ENCODE measurements at regions of chr2 and their contacts with region 1.

Region 1: DNA sequence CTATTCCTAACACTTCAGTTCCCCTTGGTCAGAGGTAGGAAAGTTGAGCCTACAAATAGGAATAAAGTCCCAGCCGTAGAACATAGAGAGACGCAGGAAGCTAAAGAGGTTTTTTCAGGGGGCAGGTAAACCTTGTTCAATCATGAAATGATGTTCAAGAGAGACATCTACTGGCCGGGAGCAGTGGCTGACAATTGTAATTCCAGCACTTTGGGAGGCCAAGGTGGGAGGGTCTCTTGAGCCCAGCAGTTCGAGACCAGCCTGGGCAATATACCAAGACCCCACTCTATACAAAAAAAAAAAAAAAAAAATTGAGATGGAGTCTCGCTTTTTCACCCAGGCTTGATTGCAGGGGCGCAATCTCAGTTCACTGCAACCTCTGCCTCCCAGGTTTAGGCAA is 66.7 kb upstream of the DNAJC10 start:
- DNase-seq: no peak
- ATAC-seq: peak; percentile 84

Region 2: GRCh38 chr2:182186132-182186735 is 463.1 kb before region 1 on chr2:
- intact Hi-C with region 1: loop called (anchors 5 kb)
- DNase-seq: no peak
- ATAC-seq: peak; percentile 75